ENCODE measurements at regions of chr12 and their contacts with region 1.

Region 1: DNA sequence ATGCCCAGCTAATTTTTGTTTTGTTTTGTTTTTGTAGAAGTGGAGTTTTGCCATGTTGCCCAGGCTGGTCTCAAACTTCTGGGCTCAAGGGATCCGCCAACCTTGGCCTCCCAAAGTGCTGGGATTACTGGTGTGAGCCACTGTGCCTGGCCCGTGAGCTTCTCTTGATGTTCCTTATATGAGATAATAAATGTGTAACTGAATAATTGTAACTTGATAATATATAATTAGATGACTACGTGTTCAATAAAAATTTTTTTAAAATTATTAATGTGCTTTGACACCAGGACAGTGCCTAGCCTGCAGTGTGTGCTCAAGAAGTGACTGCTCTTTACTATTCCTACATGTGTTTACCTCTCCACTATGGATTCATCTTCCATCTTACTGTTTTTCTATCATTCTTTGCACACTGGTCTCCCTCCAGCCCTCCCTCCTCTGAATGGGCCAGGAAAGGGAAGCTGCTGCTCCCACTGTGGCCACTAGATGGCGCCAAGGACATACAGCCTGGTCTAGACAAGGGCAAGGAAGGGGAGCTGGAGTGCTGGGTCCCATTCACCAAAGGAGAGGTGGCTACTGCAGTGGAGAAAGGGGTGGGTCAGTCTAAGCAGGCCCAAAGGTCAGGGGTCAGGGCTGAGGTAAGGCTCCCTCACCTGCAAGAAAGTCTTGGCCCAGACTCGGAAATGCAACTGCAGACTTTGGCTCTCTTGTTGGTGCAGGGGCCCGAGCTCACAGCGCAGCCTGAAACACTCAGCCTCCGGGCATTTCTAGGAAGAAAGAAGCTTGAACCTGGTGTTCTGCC is 14.7 kb upstream of the ZNF385A start:
- DNase-seq: peak; percentile 89
- H3K4me3 ChIP-seq: no peak overlapping the region
- H3K27ac ChIP-seq: peak overlapping the region; percentile 29
- H3K4me1 ChIP-seq: no peaks in the 10 kb centered on the region
- H3K27me3 ChIP-seq: no peaks in the 10 kb centered on the region
- CTCF ChIP-seq: peak; percentile 99

Region 2: GRCh38 chr12:54411391-54412241 is 12.4 kb after region 1 on chr12:
- CTCF ChIA-PET with region 1: interaction called, 12 read pairs
- POLR2A ChIA-PET with region 1: interaction called, 5 read pairs
- intact Hi-C with region 1: no loop called
- DNase-seq: peak; percentile 73
- H3K4me3 ChIP-seq: no peak overlapping the region
- H3K27ac ChIP-seq: peak overlapping the region; percentile 77
- H3K4me1 ChIP-seq: peaks cover 49% of the 10 kb centered on the region
- H3K27me3 ChIP-seq: no peaks in the 10 kb centered on the region
- CTCF ChIP-seq: no peak

Region 3: DNA sequence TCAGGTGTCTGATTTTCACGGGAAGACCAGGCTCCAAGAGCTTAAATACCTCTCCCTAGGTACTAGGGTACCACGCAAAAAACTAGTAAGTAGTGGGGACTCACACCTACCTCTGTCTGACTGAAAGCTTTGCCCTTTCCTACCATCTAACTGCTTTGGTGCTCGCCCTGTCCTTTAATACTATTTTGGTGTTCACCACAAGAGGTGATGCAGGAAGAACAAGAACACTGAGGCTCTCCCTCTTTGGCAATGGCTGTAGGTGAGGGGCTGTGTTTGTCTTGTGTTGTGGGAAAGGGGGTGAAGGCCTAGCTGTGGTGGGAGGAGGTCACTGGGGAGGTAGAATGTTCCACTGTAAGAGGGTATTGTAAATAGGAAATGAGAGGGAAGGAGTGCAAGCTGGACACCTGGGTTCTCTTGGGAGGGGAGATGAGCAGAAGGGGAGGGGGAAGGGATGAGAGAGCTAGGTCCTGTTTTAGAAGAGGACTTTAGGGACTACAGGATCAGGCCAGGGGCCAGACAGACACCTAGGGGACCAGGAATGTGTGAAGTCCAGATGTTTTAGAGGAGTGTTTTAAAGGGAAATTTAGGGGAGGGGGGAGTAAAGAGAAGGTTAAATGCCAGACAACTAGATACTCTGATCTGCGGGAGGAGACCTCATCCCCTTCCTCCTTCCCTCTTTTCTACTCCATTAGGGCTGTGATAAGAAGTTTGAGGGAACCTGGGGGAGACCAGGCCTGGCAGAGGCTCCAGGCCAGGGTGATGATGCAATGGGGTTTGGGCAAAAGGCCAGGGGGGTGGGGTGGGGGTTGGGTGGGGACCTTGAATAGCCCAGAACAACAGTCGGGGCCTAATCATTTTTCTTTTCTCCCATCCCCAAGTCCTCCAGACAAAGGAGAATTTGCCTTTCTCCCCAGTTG is 17.8 kb after region 1 on chr12:
- CTCF ChIA-PET with region 1: interaction called, 12 read pairs
- POLR2A ChIA-PET with region 1: interaction called, 5 read pairs
- intact Hi-C with region 1: no loop called
- DNase-seq: no peak
- H3K4me3 ChIP-seq: peak overlapping the region; percentile 94
- H3K27ac ChIP-seq: peak overlapping the region; percentile 90
- H3K4me1 ChIP-seq: peaks cover 68% of the 10 kb centered on the region
- H3K27me3 ChIP-seq: no peaks in the 10 kb centered on the region
- CTCF ChIP-seq: no peak

Region 4: DNA sequence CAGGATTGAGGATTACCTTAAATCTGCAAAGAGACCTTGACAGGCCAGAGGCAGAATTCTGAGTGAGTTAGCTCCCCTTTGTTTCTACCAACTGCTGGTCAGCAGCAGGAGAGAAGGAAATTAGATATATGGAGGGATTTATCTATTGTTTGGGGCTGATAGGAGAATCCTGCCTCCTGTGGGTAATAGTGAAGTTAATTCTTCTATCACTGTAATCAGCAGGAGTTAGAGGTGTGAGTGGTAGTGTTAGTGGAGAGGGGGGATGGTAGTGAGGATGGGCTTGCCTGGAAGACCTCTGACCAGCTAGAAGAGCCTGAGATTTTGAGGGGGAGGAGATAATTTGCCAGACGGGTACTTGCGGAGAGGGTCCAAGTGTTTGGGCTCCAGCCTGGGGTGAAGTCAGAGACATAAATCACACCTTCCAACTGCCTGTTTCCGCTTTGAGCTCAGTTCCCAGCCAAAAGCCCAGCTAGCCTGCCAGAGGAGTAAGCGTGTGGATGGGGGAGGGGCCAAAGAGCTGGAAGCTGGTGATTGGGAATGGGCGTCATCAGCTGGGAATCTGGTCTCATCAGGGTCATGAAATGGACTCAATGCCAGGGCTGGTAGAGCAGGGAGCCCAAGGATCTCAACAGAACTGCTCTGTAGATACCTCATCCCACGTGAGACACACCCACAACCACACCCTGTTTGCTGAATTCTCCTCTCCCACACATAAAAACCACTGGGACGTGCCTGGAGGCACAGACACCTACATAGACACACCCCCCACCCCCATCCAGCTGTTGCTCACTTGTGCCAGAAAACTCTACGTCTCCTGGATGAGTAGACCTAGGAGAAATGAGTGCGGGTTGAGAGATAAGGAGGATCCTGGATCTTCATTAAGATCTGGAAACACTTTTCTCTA is 33.0 kb after region 1 on chr12:
- CTCF ChIA-PET with region 1: interaction called, 17 read pairs
- POLR2A ChIA-PET with region 1: no interaction called
- intact Hi-C with region 1: no loop called
- DNase-seq: peak; percentile 85
- H3K4me3 ChIP-seq: no peak overlapping the region
- H3K27ac ChIP-seq: peak overlapping the region; percentile 30
- H3K4me1 ChIP-seq: peaks cover 33% of the 10 kb centered on the region
- H3K27me3 ChIP-seq: no peaks in the 10 kb centered on the region
- CTCF ChIP-seq: no peak

Region 5: GRCh38 chr12:54439521-54440255 is 40.5 kb after region 1 on chr12:
- CTCF ChIA-PET with region 1: interaction called, 133 read pairs
- POLR2A ChIA-PET with region 1: interaction called, 3 read pairs
- intact Hi-C with region 1: loop called (anchors 1 kb)
- DNase-seq: peak; percentile 79
- H3K4me3 ChIP-seq: no peak overlapping the region
- H3K27ac ChIP-seq: no peak overlapping the region
- H3K4me1 ChIP-seq: peaks cover 5% of the 10 kb centered on the region
- H3K27me3 ChIP-seq: no peaks in the 10 kb centered on the region
- CTCF ChIP-seq: peak; percentile 87

Region 6: DNA sequence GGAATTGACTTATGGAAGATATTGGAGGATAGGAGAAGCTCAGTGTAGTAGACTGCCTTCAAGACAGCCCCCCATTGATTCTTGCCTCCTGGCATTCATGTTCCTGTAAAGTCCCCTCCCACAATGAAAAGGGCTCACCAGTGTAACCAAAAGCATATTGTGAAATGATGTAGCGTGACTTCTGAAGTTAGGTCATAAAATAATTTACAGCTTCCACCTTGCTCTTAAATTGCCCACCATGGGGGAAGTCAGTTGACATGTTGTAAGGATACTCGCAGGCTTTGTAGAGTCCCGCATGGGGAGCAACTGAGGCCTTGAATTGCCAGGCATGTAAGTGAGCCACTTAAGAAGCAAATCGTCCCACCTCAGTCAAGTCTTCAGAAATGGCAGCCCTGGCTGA is 49.1 kb after region 1 on chr12:
- CTCF ChIA-PET with region 1: interaction called, 10 read pairs
- POLR2A ChIA-PET with region 1: no interaction called
- intact Hi-C with region 1: no loop called
- DNase-seq: no peak
- H3K4me3 ChIP-seq: no peak overlapping the region
- H3K27ac ChIP-seq: no peak overlapping the region
- H3K4me1 ChIP-seq: no peaks in the 10 kb centered on the region
- H3K27me3 ChIP-seq: no peaks in the 10 kb centered on the region
- CTCF ChIP-seq: no peak

Region 7: DNA sequence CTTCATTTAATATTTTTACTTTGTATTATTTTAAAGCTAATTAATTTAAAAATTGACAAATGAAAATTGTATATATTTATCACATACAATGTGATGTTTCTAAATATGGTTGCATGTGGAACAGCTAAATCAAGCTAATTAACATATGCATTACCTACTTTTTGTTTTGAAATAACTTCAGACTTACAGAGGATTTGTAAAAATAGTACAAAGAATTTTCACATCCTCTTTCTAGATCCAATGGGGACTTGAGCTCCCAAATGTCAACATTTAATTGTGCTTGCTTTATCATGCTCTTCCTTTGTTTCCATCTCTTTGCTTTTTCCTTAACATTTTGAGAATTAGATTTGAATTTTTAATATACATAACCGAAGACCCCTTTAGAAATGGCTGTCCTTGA is 242.4 kb after region 1 on chr12:
- CTCF ChIA-PET with region 1: no interaction called
- POLR2A ChIA-PET with region 1: no interaction called
- intact Hi-C with region 1: no loop called
- DNase-seq: no peak
- H3K4me3 ChIP-seq: no peak overlapping the region
- H3K27ac ChIP-seq: no peak overlapping the region
- H3K4me1 ChIP-seq: no peaks in the 10 kb centered on the region
- H3K27me3 ChIP-seq: no peaks in the 10 kb centered on the region
- CTCF ChIP-seq: no peak